MCF 10A (cell line): ENCODE measurements at regions of chr20 and their contacts with region 1.

Region 1: GRCh38 chr20:5191829-5192569 is 65.2 kb downstream of the CDS2 start:
- DNase-seq: peak; percentile 81
- H3K4me3 Mint-ChIP-seq: no peak overlapping the region
- H3K27ac Mint-ChIP-seq: no peak overlapping the region
- H3K4me1 Mint-ChIP-seq: no peaks in the 10 kb centered on the region
- H3K27me3 Mint-ChIP-seq: no peaks in the 10 kb centered on the region
- CTCF ChIP-seq: peak; percentile 81

Region 2: DNA sequence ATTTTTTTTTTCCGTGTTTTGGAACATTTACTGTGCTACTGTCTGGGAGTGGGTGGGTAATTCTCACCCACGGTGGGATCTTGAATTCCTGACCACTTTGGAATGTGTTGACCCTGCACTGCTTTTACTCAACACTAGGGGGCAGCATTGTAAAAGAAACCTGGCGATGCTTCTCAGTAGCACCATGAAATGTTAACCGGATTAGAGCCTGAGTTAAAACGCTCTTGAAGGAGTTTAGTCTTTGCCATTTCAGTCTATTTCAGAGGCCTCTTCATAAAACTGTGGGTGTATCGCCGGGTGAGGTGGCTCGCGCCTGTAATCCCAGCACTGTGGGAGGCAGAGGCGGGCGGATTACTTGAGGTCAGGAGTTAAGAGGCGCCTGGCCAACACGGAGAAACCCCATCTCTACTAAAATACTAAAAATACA is 584.7 kb before region 1 on chr20:
- CTCF ChIA-PET with region 1: interaction called, 4 read pairs
- POLR2A ChIA-PET with region 1: no interaction called
- intact Hi-C with region 1: loop called (anchors 2 kb)
- DNase-seq: peak; percentile 71
- H3K4me3 Mint-ChIP-seq: no peak overlapping the region
- H3K27ac Mint-ChIP-seq: no peak overlapping the region
- H3K4me1 Mint-ChIP-seq: peaks cover 2% of the 10 kb centered on the region
- H3K27me3 Mint-ChIP-seq: no peaks in the 10 kb centered on the region
- CTCF ChIP-seq: peak; percentile 78

Region 3: DNA sequence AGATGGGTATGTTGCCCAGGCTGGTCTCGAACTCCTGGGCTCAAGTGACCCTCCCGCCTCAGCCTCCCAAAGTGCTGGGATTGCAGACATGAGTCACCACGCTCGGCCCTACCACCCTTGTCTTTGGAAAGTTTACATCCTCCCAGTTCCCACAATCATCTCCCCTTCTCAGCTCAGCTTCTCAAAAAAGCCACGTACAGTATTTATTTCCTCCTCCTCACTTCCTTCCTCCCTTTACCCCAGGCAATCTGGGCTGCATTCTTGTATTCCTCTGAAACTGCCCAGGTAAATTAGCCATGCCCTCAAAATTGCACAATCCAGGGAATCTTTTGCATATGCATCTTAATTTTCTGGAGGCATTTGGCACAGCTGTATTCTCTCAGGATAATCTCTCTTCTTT is 183.2 kb before region 1 on chr20:
- CTCF ChIA-PET with region 1: no interaction called
- POLR2A ChIA-PET with region 1: no interaction called
- intact Hi-C with region 1: no loop called
- DNase-seq: peak; percentile 78
- H3K4me3 Mint-ChIP-seq: no peak overlapping the region
- H3K27ac Mint-ChIP-seq: peak overlapping the region; percentile 21
- H3K4me1 Mint-ChIP-seq: peaks cover 10% of the 10 kb centered on the region
- H3K27me3 Mint-ChIP-seq: no peaks in the 10 kb centered on the region
- CTCF ChIP-seq: no peak

Region 4: GRCh38 chr20:5056801-5057599 is 135.0 kb before region 1 on chr20:
- CTCF ChIA-PET with region 1: no interaction called
- POLR2A ChIA-PET with region 1: no interaction called
- intact Hi-C with region 1: no loop called
- DNase-seq: peak; percentile 65
- H3K4me3 Mint-ChIP-seq: no peak overlapping the region
- H3K27ac Mint-ChIP-seq: no peak overlapping the region
- H3K4me1 Mint-ChIP-seq: peaks cover 12% of the 10 kb centered on the region
- H3K27me3 Mint-ChIP-seq: no peaks in the 10 kb centered on the region
- CTCF ChIP-seq: peak; percentile 33

Region 5: GRCh38 chr20:5135363-5136012 is 56.5 kb before region 1 on chr20:
- CTCF ChIA-PET with region 1: interaction called, 19 read pairs
- POLR2A ChIA-PET with region 1: no interaction called
- intact Hi-C with region 1: no loop called
- DNase-seq: no peak
- H3K4me3 Mint-ChIP-seq: no peak overlapping the region
- H3K27ac Mint-ChIP-seq: peak overlapping the region; percentile 5
- H3K4me1 Mint-ChIP-seq: no peaks in the 10 kb centered on the region
- H3K27me3 Mint-ChIP-seq: no peaks in the 10 kb centered on the region
- CTCF ChIP-seq: no peak

Region 6: GRCh38 chr20:5168651-5169396 is 23.2 kb before region 1 on chr20:
- CTCF ChIA-PET with region 1: interaction called, 78 read pairs
- POLR2A ChIA-PET with region 1: interaction called, 4 read pairs
- intact Hi-C with region 1: no loop called
- DNase-seq: peak; percentile 46
- H3K4me3 Mint-ChIP-seq: no peak overlapping the region
- H3K27ac Mint-ChIP-seq: no peak overlapping the region
- H3K4me1 Mint-ChIP-seq: peaks cover 15% of the 10 kb centered on the region
- H3K27me3 Mint-ChIP-seq: no peaks in the 10 kb centered on the region
- CTCF ChIP-seq: no peak

Region 7: DNA sequence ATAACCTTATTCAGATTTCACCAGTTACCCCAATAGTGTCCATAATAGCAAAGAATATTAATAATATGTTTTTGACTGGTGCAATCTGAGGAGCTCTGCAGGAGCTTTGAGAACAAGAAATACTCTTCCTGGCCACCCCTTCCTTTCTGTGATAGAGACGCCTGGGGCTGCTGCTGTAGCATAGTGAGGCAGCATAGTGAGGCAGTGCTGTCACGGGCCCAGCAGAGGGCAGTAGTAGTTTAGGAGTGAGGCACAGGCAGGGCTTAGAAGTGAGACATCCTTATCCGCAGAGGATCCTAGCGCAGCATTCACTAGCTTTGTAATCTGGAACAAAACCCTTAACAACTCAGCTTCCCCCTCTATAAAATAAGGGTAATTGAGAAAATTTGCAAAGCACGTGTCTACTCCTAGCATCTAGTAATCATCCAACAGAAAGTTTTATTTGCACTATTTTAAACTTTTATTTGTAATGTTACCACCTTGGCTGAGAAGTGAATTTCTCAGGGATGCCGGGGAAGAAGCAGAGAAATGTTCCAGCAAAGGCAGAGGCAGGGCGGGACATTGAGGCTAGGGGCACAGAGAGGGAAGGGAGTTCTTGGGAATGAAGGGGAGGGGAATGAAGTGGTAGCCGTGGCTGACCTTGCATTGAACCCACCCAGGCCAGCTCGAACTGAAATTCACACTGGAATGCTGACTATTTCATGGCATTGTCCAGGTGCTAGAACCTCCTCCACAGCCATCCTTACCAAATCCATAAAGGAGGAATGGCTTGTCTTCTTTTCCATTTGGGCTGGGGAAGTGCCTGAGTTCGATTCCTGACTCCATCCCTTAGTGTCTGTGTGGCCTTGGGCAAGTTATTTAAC is 13.6 kb after region 1 on chr20:
- CTCF ChIA-PET with region 1: interaction called, 68 read pairs
- POLR2A ChIA-PET with region 1: interaction called, 3 read pairs
- intact Hi-C with region 1: no loop called
- DNase-seq: peak; percentile 70
- H3K4me3 Mint-ChIP-seq: no peak overlapping the region
- H3K27ac Mint-ChIP-seq: no peak overlapping the region
- H3K4me1 Mint-ChIP-seq: no peaks in the 10 kb centered on the region
- H3K27me3 Mint-ChIP-seq: no peaks in the 10 kb centered on the region
- CTCF ChIP-seq: peak; percentile 88